Activated B cell treated with CpG ODN at 0.5 μM for 24 hours (primary cell): ENCODE measurements at regions of chr19 and their contacts with region 1.

Region 1: DNA sequence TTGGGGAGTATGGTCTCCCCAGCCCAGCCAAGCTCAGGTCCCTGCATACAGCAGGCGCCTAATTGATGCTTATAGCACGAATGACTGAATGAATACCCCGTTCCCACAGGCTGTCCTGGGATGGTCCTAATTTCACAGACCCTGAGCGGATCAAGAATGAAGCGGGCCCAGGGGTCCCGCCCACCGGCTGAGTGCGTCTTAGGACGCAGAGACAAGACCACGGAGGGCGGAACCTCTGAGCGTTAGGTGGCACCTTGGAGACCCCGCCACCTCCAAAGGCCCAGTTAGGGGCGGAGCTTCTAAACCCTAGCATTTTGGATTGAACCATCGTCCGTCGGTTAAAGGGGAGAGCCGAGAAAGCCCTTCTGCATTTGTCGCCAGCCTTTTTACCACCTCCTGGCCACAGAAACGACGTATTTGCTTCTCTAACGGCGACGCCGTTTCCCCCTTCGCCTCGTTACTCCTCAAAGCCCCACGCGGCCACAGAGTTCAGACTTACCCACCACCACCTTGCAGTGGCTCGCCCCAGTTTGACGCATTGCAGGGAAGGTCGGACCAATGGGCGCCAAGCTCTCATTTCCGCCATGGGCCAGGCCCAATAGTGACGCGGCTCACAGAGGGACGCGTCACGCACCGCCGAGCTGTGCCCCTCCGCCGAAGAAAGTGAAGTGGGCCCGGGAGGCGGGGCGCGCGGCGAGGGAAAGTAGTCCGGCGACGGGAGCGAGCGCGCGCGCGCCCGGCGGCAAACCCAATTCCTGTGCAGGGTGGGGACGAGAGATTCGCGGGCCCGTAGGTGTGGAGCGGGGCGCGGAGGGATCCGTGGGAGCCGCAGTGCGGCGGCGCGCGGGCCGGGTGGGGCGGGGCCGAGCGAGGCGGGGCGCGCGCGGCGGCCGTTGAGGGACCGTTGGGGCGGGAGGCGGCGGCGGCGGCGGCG is 479 bp upstream of the CALM3 start:
- DNase-seq: peak; percentile 99
- ATAC-seq: peak; percentile 90
- H3K4me3 Mint-ChIP-seq: peak overlapping the region; percentile 99
- H3K27ac Mint-ChIP-seq: peak overlapping the region; percentile 100
- H3K4me1 Mint-ChIP-seq: peaks cover 30% of the 10 kb centered on the region
- H3K27me3 Mint-ChIP-seq: no peaks in the 10 kb centered on the region
- CTCF ChIP-seq: no peak

Region 2: DNA sequence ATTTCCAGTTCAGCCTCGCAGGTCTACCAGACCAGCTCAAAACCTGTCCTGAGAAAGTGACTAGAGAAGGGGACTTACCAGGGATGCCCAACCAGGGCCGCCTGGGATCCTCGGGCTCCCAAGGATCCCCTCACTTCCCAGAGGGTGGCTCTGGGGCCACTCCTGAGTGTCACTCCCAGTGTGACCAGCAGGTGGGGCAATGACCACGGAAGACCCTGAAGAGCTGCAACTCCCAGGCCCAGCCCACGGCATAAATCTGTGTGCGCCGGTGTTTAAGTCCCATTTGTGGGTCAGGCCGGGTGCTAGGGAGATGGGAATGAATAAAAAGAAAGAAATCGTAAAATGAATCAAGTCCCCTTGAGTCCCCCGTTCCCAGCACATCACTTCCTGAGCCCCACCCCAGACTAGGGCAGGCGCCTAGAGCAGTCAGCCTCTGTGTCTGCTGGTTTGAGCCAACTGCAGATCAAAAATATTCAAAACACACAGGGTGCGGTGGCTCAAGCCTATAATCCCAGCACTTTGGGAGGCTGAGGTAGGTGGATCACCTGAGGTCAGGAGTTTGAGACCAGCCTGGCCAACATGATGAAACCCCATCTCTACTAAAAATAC is 13.6 kb after region 1 on chr19:
- CTCF ChIA-PET with region 1: interaction called, 14 read pairs
- POLR2A ChIA-PET with region 1: interaction called, 69 read pairs
- intact Hi-C with region 1: loop called (anchors 2 kb)
- DNase-seq: peak; percentile 82
- ATAC-seq: peak; percentile 71
- H3K4me3 Mint-ChIP-seq: no peak overlapping the region
- H3K27ac Mint-ChIP-seq: peak overlapping the region; percentile 63
- H3K4me1 Mint-ChIP-seq: peaks cover 66% of the 10 kb centered on the region
- H3K27me3 Mint-ChIP-seq: no peaks in the 10 kb centered on the region
- CTCF ChIP-seq: peak; percentile 42

Region 3: DNA sequence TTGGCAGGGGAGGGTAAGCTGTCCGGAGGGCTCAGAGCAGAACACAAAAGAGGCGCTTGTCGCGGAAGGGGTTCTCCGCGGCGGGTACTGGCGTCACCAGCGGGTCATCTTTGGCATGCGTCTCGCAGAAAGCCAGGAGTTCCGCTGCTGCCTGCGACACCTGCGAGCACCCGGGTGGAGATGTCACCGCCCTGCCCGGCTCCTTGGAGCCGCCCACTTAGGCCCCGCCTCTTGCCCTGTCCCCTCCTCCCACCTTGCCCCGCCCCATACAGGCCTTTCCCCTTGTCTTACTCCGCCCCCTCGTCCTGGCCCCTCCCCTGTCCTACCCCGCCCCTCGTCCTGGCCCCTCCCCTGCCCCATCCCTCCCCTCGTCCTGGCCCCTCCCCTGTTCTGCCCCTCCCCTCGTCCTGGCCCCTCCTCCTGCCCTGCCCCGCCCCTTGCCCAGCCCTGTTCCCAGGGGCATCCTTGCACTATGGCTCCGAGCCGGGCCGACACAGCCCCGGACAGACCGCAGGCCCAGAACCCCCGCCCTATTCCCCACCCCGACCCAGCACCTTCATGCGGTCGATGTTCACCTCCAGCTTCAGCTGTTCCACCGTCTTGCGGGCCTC is 33.5 kb after region 1 on chr19:
- CTCF ChIA-PET with region 1: no interaction called
- POLR2A ChIA-PET with region 1: interaction called, 23 read pairs
- intact Hi-C with region 1: loop called (anchors 1 kb)
- DNase-seq: peak; percentile 92
- ATAC-seq: peak; percentile 80
- H3K4me3 Mint-ChIP-seq: peak overlapping the region; percentile 81
- H3K27ac Mint-ChIP-seq: peak overlapping the region; percentile 64
- H3K4me1 Mint-ChIP-seq: peaks cover 30% of the 10 kb centered on the region
- H3K27me3 Mint-ChIP-seq: no peaks in the 10 kb centered on the region
- CTCF ChIP-seq: no peak

Region 4: GRCh38 chr19:46717034-46717723 is 116.5 kb after region 1 on chr19 and contains the start of gene PRKD2:
- CTCF ChIA-PET with region 1: no interaction called
- POLR2A ChIA-PET with region 1: interaction called, 18 read pairs
- intact Hi-C with region 1: loop called (anchors 1 kb)
- DNase-seq: peak; percentile 92
- ATAC-seq: peak; percentile 47
- H3K4me3 Mint-ChIP-seq: peak within 1 kb of the TSS; percentile 94
- H3K27ac Mint-ChIP-seq: peak within 1 kb of the TSS; percentile 97
- H3K4me1 Mint-ChIP-seq: peaks cover 76% of the 10 kb centered on the region
- H3K27me3 Mint-ChIP-seq: no peaks in the 10 kb centered on the region
- CTCF ChIP-seq: no peak
- total RNA-seq, gene PRKD2: 157 and 191 TPM in 2 replicates

Region 5: GRCh38 chr19:46850228-46851203 is 249.9 kb after region 1 on chr19 and contains the start of gene AP2S1:
- CTCF ChIA-PET with region 1: no interaction called
- POLR2A ChIA-PET with region 1: interaction called, 6 read pairs
- intact Hi-C with region 1: loop called (anchors 2 kb)
- DNase-seq: peak; percentile 84
- ATAC-seq: peak; percentile 91
- H3K4me3 Mint-ChIP-seq: peak within 1 kb of the TSS; percentile 96
- H3K27ac Mint-ChIP-seq: peak within 1 kb of the TSS; percentile 82
- H3K4me1 Mint-ChIP-seq: peaks cover 37% of the 10 kb centered on the region
- H3K27me3 Mint-ChIP-seq: no peaks in the 10 kb centered on the region
- CTCF ChIP-seq: no peak
- total RNA-seq, gene AP2S1: 74.7 and 81.3 TPM in 2 replicates

Region 6: GRCh38 chr19:46886546-46887239 is 286.0 kb after region 1 on chr19:
- CTCF ChIA-PET with region 1: no interaction called
- POLR2A ChIA-PET with region 1: no interaction called
- intact Hi-C with region 1: no loop called
- DNase-seq: no peak
- ATAC-seq: no peak
- H3K4me3 Mint-ChIP-seq: no peak overlapping the region
- H3K27ac Mint-ChIP-seq: no peak overlapping the region
- H3K4me1 Mint-ChIP-seq: peaks cover 26% of the 10 kb centered on the region
- H3K27me3 Mint-ChIP-seq: no peaks in the 10 kb centered on the region
- CTCF ChIP-seq: no peak

Region 7: GRCh38 chr19:47047763-47048405 is 447.2 kb after region 1 on chr19:
- CTCF ChIA-PET with region 1: no interaction called
- POLR2A ChIA-PET with region 1: no interaction called
- intact Hi-C with region 1: loop called (anchors 2 kb)
- DNase-seq: peak; percentile 52
- ATAC-seq: peak; percentile 32
- H3K4me3 Mint-ChIP-seq: peak overlapping the region; percentile 95
- H3K27ac Mint-ChIP-seq: peak overlapping the region; percentile 89
- H3K4me1 Mint-ChIP-seq: peaks cover 15% of the 10 kb centered on the region
- H3K27me3 Mint-ChIP-seq: no peaks in the 10 kb centered on the region
- CTCF ChIP-seq: no peak